Body of pancreas (tissue), 4 donors: ENCODE measurements at regions of chr1 and their contacts with region 1.

Region 1: GRCh38 chr1:160607011-160607671 is 27.8 kb upstream of the CD84 start:
- DNase-seq: peak; percentile 60 to 76 (median 66)
- ATAC-seq: peak; percentile 94
- H3K4me3 ChIP-seq: no peak overlapping the region
- H3K27ac ChIP-seq: no peak overlapping the region
- H3K4me1 ChIP-seq: no peaks in the 10 kb centered on the region
- H3K27me3 ChIP-seq: no peaks in the 10 kb centered on the region
- CTCF ChIP-seq: peak; percentile 52 to 94 (median 90)
- POLR2A ChIP-seq: no peak

Region 2: GRCh38 chr1:160428655-160429054 is 178.5 kb before region 1 on chr1:
- intact Hi-C with region 1: loop called (anchors 5 kb)
- DNase-seq: peak; percentile 68 to 79 (median 77)
- ATAC-seq: peak; percentile 89
- H3K4me3 ChIP-seq: no peak overlapping the region
- H3K27ac ChIP-seq: peak overlapping the region in 1 of 4 donors; percentile 12
- H3K4me1 ChIP-seq: peaks cover 13% of the 10 kb centered on the region
- H3K27me3 ChIP-seq: no peaks in the 10 kb centered on the region
- CTCF ChIP-seq: peak in 6 of 7 experiments; percentile 49 to 92 (median 88)
- POLR2A ChIP-seq: no peak

Region 3: DNA sequence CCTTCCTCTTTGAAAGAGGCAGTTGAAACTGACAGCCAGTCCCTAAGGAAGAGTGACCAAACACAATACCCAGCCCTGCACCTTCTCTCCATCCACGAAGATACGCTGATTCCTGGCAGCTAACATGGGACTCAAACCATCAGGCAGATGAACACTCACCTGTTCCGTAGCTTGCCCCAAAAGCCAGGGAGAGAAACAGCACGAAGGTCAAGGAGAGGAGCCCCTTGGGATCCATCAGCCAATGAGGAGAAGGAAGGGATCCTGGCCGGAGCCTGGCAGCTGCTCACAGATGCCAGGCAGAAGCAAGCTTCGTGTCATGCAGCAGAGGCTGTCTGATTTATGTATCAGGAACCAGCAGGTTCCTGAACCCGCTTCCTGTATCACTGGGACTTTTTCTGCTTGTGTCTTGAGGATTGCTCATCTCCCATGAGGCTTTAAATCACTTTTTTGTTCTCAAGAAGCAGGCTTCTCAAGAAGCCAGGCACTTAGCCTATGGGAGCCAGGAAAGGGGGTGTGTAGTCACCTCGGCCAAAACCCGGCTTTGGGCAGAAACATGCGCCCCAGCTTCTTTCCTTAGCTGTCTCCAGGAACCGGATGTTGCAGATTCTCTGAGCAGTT is 39.7 kb after region 1 on chr1 and contains the start of gene SLAMF1:
- intact Hi-C with region 1: no loop called
- DNase-seq: peak in 1 of 4 donors; percentile 20
- ATAC-seq: no peak
- H3K4me3 ChIP-seq: no peak within 1 kb of the TSS
- H3K27ac ChIP-seq: no peak within 1 kb of the TSS
- H3K4me1 ChIP-seq: peaks cover 13% of the 10 kb centered on the region
- H3K27me3 ChIP-seq: no peaks in the 10 kb centered on the region
- CTCF ChIP-seq: no peak
- POLR2A ChIP-seq: no peak
- total RNA-seq, gene SLAMF1: not detected